Gastrocnemius medialis (tissue), 4 donors: ENCODE measurements at regions of chr12 and their contacts with region 1.

Region 1: DNA sequence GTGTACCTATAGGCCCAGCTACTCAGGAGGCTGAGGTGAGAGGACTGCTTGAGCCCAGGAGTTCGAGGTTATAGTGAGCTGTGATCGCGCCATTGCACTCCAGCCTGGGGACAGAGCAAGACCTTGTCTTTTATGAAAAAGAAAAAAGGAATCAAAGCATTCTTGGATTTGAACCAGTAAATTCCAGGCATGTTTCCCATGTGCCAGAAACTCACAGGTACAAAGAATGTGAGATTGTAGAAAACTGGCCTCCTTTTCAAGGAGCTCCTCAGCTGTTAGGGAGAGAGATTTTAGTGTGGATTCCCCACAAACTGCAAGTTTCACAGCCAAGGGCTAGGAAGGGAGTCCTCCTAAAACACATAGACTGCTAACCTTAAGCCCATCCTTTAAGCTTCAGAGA is 95.0 kb downstream of the FOXN4 start:
- DNase-seq: no peak
- ATAC-seq: no peak
- H3K4me3 ChIP-seq: no peak overlapping the region
- H3K27ac ChIP-seq: peak overlapping the region in 2 of 4 donors; percentile 23 to 32
- H3K4me1 ChIP-seq: peaks cover 0 to 2% of the 10 kb centered on the region in 2 donors
- H3K27me3 ChIP-seq: no peaks in the 10 kb centered on the region
- CTCF ChIP-seq: no peak
- POLR2A ChIP-seq: no peak

Region 2: DNA sequence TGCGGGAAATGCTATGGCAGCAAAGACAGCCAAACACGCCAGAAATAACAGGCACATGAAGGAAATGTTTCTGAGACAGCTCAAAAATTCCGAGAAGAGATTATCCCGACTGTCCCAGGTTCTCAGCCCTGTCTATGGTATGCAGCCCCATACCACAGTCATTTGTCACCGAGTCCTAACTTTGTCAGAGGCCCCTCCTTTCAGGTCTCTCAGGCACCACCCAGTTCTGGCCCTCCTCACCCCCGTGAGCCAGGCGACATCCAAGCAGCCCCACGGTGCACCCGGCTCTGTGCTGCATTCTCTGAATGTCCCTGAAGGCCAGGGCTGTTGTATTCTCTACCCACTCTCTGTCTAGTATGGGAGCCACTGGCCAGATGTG is 380.8 kb before region 1 on chr12:
- in situ Hi-C with region 1: no loop called
- intact Hi-C with region 1: no loop called
- DNase-seq: peak in 1 of 2 donors; percentile 54
- ATAC-seq: peak in 1 of 2 donors; percentile 22
- H3K4me3 ChIP-seq: peak overlapping the region in 1 of 4 donors; percentile 0
- H3K27ac ChIP-seq: peak overlapping the region; percentile 80 to 98 (median 82)
- H3K4me1 ChIP-seq: peaks cover 66 to 70% of the 10 kb centered on the region in 2 donors
- H3K27me3 ChIP-seq: no peaks in the 10 kb centered on the region
- CTCF ChIP-seq: no peak
- POLR2A ChIP-seq: peak; percentile 11 to 29

Region 3: DNA sequence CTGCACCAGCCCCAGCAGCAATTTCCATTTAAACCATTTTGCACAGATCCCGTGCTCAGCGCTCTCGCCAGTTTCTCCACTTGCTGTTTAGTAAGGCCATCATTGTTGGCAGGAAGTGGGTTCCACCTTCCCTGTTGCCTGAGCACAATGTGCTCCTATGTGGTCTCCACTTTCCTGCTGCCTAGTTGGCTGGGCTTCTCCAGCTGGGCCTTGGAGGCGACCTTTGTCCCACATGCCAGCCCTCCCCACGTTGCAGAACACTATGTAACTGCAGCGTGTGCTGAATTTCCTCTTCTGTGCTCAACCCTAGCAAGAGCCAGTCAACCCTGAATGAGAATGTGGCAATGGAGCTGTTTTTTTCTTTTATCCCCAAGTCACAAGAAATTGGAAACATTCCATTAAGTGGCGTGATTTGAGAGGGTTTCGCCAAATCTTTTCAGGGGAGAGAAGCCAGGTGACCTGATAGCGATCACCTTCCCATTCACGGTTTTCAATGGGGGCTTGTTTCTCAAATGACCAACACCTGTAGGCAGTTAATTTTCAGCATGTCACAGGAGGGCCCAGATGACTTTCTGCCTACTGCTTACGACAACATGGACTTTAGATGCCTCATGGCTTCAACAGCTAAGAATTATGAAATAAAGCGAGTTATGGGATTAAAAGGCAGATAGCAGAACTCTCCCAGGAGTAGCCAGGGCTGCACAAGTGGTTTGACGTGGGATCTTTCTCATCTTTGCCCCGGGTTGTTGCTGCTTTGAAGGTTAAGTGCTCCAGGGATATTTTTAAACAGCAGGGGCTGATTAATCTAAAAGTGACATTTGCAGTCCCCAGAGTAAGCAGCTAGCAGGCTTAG is 98.1 kb before region 1 on chr12 and contains the start of gene ACACB:
- in situ Hi-C with region 1: no loop called
- intact Hi-C with region 1: no loop called
- DNase-seq: peak; percentile 95 to 98
- ATAC-seq: peak; percentile 71 to 74
- H3K4me3 ChIP-seq: peak within 1 kb of the TSS; percentile 67 to 78 (median 72)
- H3K27ac ChIP-seq: peak within 1 kb of the TSS; percentile 93 to 99 (median 97)
- H3K4me1 ChIP-seq: peaks cover 35 to 76% of the 10 kb centered on the region in 2 donors
- H3K27me3 ChIP-seq: no peaks in the 10 kb centered on the region
- CTCF ChIP-seq: no peak
- POLR2A ChIP-seq: peak; percentile 84 to 87
- total RNA-seq, gene ACACB: 595 to 1,103 (median 698) TPM

Region 4: DNA sequence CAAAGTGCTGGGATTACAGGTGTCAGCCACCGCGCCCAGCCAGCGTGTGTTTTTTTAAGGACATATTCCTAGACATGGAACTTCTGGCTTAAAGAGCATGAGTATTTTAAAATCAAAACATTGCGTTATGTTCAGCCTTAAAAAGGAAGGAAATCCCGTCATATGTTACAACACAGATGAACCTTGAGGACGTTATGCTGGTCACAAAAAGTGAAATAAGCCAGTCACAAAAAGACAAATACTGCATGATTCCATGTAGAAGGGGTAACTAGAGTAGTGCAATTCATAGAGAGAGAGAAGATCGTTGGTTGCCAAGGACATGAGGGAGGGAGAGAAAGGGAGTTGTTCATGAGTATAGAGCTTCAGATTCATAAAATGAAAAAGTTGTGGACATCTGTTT is 43.8 kb before region 1 on chr12:
- in situ Hi-C with region 1: no loop called
- intact Hi-C with region 1: loop called (anchors 5 kb)
- DNase-seq: no peak
- ATAC-seq: no peak
- H3K4me3 ChIP-seq: no peak overlapping the region
- H3K27ac ChIP-seq: peak overlapping the region; percentile 24 to 54 (median 36)
- H3K4me1 ChIP-seq: no peaks in the 10 kb centered on the region
- H3K27me3 ChIP-seq: no peaks in the 10 kb centered on the region
- CTCF ChIP-seq: no peak
- POLR2A ChIP-seq: no peak

Region 5: GRCh38 chr12:109597795-109598427 is 383.8 kb after region 1 on chr12:
- in situ Hi-C with region 1: no loop called
- intact Hi-C with region 1: no loop called
- DNase-seq: peak; percentile 76 to 81
- ATAC-seq: peak; percentile 53 to 60
- H3K4me3 ChIP-seq: no peak overlapping the region
- H3K27ac ChIP-seq: peak overlapping the region; percentile 8 to 61 (median 45)
- H3K4me1 ChIP-seq: peaks cover 22 to 31% of the 10 kb centered on the region in 2 donors
- H3K27me3 ChIP-seq: no peaks in the 10 kb centered on the region
- CTCF ChIP-seq: peak; percentile 94 to 98 (median 95)
- POLR2A ChIP-seq: no peak